IMR-90 (cell line): ENCODE measurements at regions of chr5 and their contacts with region 1.

Region 1: DNA sequence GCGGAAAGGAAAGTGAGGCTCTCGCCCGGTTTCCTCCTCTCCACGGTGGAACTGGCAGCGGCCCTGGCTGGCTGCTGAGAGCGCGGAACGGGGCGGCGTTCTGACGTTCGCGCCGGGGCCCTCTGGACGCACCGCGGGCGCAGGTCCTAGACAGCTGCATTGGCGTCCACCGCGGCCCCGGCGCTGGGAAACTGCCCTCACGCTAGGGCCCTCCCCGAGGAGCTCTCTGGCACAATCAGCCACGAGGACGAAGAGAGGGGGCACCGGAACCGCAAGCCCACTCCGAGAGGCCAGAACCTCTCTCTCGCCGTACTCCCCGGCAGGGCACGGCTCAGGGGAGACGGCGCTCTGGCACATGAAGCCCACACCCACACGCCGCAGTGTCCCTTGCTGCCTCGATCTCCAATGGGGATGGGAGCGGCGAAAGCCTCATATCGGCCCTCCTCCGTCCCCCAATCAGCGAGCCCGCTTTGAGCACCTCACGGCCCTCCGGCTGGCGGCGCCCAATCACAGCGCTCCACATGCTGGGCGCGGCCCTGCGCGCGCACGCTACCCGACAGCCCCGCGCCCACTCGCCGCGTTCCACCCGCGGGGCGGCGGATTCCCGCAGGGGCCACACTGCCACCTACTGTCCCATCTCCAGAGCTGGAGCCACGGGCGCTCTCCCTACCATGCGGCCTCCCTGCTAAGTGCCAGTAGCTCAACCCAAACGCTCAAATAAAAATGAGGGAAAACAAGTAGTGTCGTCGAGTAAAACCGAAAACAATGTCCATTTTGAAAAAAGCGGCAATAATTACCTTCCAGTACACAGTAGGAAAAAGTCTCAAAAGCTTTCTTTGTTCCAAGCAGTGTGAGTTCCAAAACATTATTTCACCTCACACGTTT is 11.8 kb downstream of the MRPS27 start:
- DNase-seq: peak; percentile 97
- ATAC-seq: peak; percentile 99
- H3K4me3 ChIP-seq: peak overlapping the region; percentile 58
- H3K27ac ChIP-seq: peak overlapping the region; percentile 58
- H3K4me1 ChIP-seq: no peaks in the 10 kb centered on the region; the same call in 1 of the 2 replicates
- H3K27me3 ChIP-seq: no peaks in the 10 kb centered on the region
- CTCF ChIP-seq: peak; percentile 95
- POLR2A ChIP-seq: peak; percentile 90
- RAD21 ChIP-seq: peak; percentile 90

Region 2: GRCh38 chr5:71782771-71783770 is 525.1 kb before region 1 on chr5:
- CTCF ChIA-PET with region 1: interaction called, 3 read pairs
- POLR2A ChIA-PET with region 1: interaction called, 3 read pairs
- dilution Hi-C with region 1: no loop called
- in situ Hi-C with region 1: loop called (anchors 5 kb)
- intact Hi-C with region 1: loop called (anchors 1 kb)
- DNase-seq: peak; percentile 75
- ATAC-seq: peak; percentile 95
- H3K4me3 ChIP-seq: peak overlapping the region; percentile 7; the same call in 1 of the 2 replicates
- H3K27ac ChIP-seq: 0 out of 2 replicates have a peak overlapping the region, but pooled peaks have one; percentile 7
- H3K4me1 ChIP-seq: peaks cover 2% of the 10 kb centered on the region; the same call in 1 of the 2 replicates
- H3K27me3 ChIP-seq: peaks cover 12% of the 10 kb centered on the region
- CTCF ChIP-seq: peak; percentile 85
- POLR2A ChIP-seq: 0 out of 2 replicates have a peak, but pooled peaks have one; percentile 40
- RAD21 ChIP-seq: peak; percentile 87

Region 3: DNA sequence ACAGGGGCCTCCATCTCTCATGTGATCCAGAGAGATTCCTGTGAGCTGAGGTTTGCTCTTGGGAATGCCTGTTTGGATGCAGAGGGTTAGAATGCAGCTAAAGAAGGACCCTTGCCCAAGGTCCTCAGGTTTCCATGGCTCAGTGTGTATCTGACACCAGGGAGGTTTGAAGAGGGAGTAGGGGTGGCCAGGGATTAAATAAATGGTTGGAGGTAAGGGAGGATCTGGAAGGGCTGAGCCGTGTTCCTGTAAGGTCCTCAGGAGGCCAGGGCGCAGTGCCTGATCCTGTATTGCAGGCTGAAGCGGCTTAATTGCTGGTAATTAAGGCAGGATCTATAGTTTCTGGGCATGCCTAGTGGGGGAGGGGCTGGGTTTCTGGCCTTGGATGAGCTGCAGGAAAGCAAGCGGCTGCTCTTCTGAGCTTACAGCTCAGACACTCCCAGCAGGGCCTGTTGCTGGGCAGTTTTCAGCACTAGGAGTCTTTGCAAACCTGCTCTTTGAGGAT is 242.4 kb before region 1 on chr5:
- CTCF ChIA-PET with region 1: no interaction called
- POLR2A ChIA-PET with region 1: no interaction called
- dilution Hi-C with region 1: no loop called
- in situ Hi-C with region 1: no loop called
- intact Hi-C with region 1: loop called (anchors 5 kb)
- DNase-seq: peak; percentile 50
- ATAC-seq: peak; percentile 36
- H3K4me3 ChIP-seq: no peak overlapping the region
- H3K27ac ChIP-seq: peak overlapping the region; percentile 3; the same call in 1 of the 2 replicates
- H3K4me1 ChIP-seq: peaks cover 13% of the 10 kb centered on the region
- H3K27me3 ChIP-seq: peaks cover 5% of the 10 kb centered on the region
- CTCF ChIP-seq: no peak
- POLR2A ChIP-seq: no peak
- RAD21 ChIP-seq: no peak

Region 4: DNA sequence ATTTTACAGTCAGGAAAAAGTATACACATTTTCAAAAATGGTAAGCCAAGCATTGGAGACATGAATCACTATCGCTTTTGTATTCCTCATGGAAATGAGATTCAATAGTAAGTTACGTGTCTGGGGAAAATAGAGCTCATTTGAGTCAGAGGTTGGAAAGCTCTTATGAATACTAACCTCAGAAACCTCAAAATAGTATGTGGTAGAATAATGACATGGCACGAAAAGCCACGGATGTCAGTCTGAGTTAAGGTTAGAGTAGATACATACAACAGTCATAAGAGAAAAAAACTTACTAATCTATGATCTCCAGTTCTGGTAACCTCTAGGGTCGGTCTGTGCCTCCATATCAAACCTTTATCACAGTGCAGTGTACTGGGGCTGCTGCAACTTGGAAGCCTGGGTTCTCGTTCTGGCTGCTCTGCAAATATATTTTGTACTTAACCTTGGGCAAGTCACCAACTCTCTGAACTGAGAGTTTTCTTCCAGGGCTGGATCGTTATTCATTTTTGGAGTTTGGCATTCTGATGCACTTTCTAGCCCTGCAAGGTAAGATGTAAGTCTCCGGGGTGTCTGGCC is 169.2 kb before region 1 on chr5:
- CTCF ChIA-PET with region 1: no interaction called
- POLR2A ChIA-PET with region 1: no interaction called
- dilution Hi-C with region 1: no loop called
- in situ Hi-C with region 1: no loop called
- intact Hi-C with region 1: loop called (anchors 2 kb)
- DNase-seq: peak; percentile 97
- ATAC-seq: peak; percentile 38
- H3K4me3 ChIP-seq: no peak overlapping the region
- H3K27ac ChIP-seq: peak overlapping the region; percentile 83
- H3K4me1 ChIP-seq: peaks cover 19% of the 10 kb centered on the region
- H3K27me3 ChIP-seq: no peaks in the 10 kb centered on the region
- CTCF ChIP-seq: no peak
- POLR2A ChIP-seq: no peak
- RAD21 ChIP-seq: no peak

Region 5: DNA sequence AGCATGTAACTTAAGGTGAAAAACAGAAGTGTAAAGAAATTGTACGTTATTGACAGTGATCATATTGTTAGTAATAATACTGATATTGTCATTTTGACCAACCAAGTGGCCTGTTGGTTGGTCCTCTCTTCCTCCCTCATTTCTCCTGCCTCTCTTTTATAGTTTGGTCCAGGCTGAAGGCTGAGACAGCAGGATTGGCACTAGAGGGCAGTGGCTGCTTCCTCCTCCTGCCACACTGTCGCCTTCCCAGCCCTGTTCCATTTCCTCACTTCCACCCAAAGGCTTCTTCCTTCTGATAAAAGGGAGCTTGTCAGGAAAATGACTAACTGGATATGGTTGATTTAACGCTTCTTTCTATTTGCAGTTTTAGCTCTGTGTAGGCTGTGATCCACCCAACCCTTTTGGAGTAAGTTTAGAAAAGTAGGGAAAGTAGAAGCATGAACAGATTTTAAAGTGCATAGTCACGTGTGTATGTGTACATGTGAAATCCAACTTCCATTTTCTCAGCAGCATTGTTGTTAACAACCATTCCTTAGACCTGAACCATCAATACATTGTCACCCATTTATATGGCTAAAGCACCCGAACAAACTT is 47.6 kb after region 1 on chr5:
- CTCF ChIA-PET with region 1: no interaction called
- POLR2A ChIA-PET with region 1: no interaction called
- dilution Hi-C with region 1: no loop called
- in situ Hi-C with region 1: no loop called
- intact Hi-C with region 1: no loop called
- DNase-seq: peak; percentile 22
- ATAC-seq: peak; percentile 48
- H3K4me3 ChIP-seq: no peak overlapping the region
- H3K27ac ChIP-seq: no peak overlapping the region
- H3K4me1 ChIP-seq: no peaks in the 10 kb centered on the region
- H3K27me3 ChIP-seq: no peaks in the 10 kb centered on the region
- CTCF ChIP-seq: peak; percentile 40
- POLR2A ChIP-seq: no peak
- RAD21 ChIP-seq: peak; percentile 46

Region 6: GRCh38 chr5:72842816-72843215 is 534.6 kb after region 1 on chr5:
- CTCF ChIA-PET with region 1: no interaction called
- POLR2A ChIA-PET with region 1: no interaction called
- dilution Hi-C with region 1: no loop called
- in situ Hi-C with region 1: no loop called
- intact Hi-C with region 1: no loop called
- DNase-seq: peak; percentile 65
- ATAC-seq: peak; percentile 65
- H3K4me3 ChIP-seq: no peak overlapping the region
- H3K27ac ChIP-seq: peak overlapping the region; percentile 57; the same call in 1 of the 2 replicates
- H3K4me1 ChIP-seq: peaks cover 13% of the 10 kb centered on the region
- H3K27me3 ChIP-seq: no peaks in the 10 kb centered on the region
- CTCF ChIP-seq: peak; percentile 34
- POLR2A ChIP-seq: no peak
- RAD21 ChIP-seq: peak; percentile 55